ENCODE measurements at regions of chr5 and their contacts with region 1.

Region 1: DNA sequence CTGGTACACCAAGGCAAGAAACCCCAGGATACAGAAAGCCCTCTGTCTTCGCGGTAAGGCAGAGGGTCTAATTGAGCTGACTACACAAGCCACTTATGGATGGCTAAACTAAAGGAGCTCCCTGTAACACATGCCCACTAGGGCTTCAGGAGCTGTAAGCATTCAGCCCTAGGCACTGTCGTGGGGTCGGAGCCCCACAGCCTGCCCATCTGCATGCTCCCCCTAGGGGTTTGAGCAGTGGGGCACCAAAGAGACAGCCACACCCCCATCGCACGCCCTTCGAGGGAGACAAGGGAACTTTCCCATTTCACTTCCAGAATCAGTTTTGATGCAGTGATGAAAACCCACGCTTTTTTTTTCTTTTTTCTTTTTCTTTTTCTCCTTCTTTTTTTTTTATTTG is 11.0 kb upstream of the MTMR12 start:
- DNase-seq: no peak
- ATAC-seq: no peak
- H3K4me3 ChIP-seq: no peak overlapping the region
- H3K27ac ChIP-seq: no peak overlapping the region
- H3K4me1 ChIP-seq: peaks cover 10% of the 10 kb centered on the region
- H3K27me3 ChIP-seq: no peaks in the 10 kb centered on the region
- CTCF ChIP-seq: no peak
- POLR2A ChIP-seq: no peak

Region 2: GRCh38 chr5:32232441-32233219 is 91.1 kb before region 1 on chr5:
- intact Hi-C with region 1: loop called (anchors 5 kb)
- DNase-seq: peak; percentile 86 to 89 (median 87)
- ATAC-seq: peak; percentile 75
- H3K4me3 ChIP-seq: no peak overlapping the region
- H3K27ac ChIP-seq: peak overlapping the region; percentile 84 to 88 (median 86)
- H3K4me1 ChIP-seq: peaks cover 45% of the 10 kb centered on the region
- H3K27me3 ChIP-seq: no peaks in the 10 kb centered on the region
- CTCF ChIP-seq: peak; percentile 67 to 92 (median 86)
- POLR2A ChIP-seq: no peak

Measured in body of pancreas (tissue), 4 donors.